Tibial artery (tissue), 4 donors: ENCODE measurements at regions of chr15 and their contacts with region 1.

Region 1: DNA sequence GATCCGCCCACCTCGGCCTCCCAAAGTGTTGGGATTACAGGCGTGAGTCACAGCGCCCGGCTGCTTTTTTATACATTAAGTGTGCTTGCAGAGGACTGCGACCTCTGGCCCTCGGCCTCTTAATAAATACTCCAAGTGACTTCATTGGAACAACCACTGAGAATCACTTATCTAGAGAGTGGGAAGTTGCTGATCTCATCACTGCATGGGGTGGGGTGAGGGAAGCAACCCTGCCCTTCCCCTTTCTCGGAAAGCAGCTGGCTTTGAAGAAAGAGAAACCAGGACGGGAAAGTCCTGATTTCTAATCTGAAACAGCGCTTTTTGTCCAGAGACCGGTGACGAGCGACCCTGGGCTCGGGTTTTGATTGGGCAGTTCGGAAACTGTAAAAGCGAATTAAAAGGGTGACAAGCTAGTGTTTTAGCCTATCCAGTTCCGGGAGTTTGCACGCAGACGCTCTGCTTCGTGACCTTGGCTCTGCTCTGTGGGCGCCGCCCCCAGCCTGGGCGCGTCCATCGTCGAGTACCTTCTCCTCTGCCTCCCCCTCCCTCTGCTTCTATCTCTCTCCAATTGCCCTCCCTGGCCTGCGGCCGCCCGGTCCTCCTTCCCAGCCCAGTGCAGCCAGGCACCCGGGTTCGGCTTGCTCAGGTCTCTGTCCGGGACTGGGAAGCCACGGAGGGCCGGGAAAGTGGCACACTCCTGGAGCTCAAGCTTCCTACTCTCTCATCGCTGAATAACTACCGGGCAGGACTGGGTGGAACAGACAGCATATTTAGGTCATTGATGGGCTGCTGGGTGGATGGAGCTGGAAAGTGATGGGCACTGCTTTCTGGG is 7.5 kb upstream of the TRIM69 start:
- DNase-seq: peak; percentile 97 to 98
- H3K4me3 ChIP-seq: peak overlapping the region; percentile 82 to 86
- H3K27ac ChIP-seq: peak overlapping the region; percentile 93 to 95
- H3K4me1 ChIP-seq: peaks cover 0 to 37% (median 4%) of the 10 kb centered on the region in 4 donors
- H3K27me3 ChIP-seq: no peaks in the 10 kb centered on the region
- CTCF ChIP-seq: no peak

Region 2: DNA sequence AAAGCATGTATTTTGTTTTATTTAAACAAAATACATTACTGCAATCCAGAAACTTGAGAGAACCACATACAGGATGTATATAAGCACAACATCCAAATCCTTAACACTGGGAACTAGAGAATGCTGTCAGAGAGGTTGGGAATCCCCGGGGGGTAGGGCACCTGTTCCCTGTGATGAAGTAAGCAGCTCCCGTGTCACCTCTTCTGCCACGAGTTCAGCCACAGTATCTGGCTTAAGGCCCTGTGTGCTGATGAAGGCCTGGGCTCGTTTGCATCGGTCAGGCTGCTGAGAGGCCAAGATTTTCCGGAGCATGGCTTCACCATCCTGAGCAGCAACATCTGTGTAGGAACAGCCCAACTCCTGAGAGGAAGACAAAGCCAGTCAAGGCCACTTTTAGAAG is 155.4 kb before region 1 on chr15:
- intact Hi-C with region 1: no loop called
- DNase-seq: no peak
- H3K4me3 ChIP-seq: no peak overlapping the region
- H3K27ac ChIP-seq: no peak overlapping the region
- H3K4me1 ChIP-seq: no peaks in the 10 kb centered on the region
- H3K27me3 ChIP-seq: no peaks in the 10 kb centered on the region
- CTCF ChIP-seq: no peak

Region 3: GRCh38 chr15:44711356-44712107 is 17.3 kb before region 1 on chr15 and contains the start of gene B2M:
- intact Hi-C with region 1: loop called (anchors 1 kb)
- DNase-seq: peak; percentile 96 to 98
- H3K4me3 ChIP-seq: peak within 1 kb of the TSS; percentile 86 to 98
- H3K27ac ChIP-seq: peak within 1 kb of the TSS; percentile 97 to 99
- H3K4me1 ChIP-seq: peaks cover 0 to 20% (median 6%) of the 10 kb centered on the region in 4 donors
- H3K27me3 ChIP-seq: no peaks in the 10 kb centered on the region
- CTCF ChIP-seq: no peak

Region 4: GRCh38 chr15:46735115-46735514 is 2006.3 kb after region 1 on chr15:
- intact Hi-C with region 1: no loop called
- DNase-seq: no peak
- H3K4me3 ChIP-seq: no peak overlapping the region
- H3K27ac ChIP-seq: no peak overlapping the region
- H3K4me1 ChIP-seq: no peaks in the 10 kb centered on the region
- H3K27me3 ChIP-seq: no peaks in the 10 kb centered on the region
- CTCF ChIP-seq: no peak